Right ventricle myocardium superior (tissue), 1 donor: ENCODE measurements at regions of chr2 and their contacts with region 1.

Region 1: DNA sequence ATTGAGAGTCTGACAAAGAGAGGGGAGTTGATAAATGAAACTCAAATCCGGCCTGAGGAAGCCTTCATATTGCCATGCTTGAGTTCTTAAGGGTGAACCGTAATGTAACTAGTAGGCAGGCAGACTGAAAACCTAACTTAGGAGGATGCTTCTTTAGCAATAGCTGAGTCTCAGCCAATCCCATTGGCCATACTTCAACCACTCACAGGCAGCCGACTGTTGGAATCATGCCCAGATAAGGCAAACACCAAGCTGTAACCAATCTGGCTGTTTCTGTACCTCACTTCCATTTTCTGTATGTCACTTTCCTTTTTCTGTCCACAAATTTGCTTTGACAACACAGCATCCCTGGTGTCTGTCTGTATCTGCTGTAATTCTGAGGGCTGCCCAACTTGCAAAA is 39.5 kb downstream of the TPRKB start:
- DNase-seq: no peak
- ATAC-seq: no peak

Region 2: DNA sequence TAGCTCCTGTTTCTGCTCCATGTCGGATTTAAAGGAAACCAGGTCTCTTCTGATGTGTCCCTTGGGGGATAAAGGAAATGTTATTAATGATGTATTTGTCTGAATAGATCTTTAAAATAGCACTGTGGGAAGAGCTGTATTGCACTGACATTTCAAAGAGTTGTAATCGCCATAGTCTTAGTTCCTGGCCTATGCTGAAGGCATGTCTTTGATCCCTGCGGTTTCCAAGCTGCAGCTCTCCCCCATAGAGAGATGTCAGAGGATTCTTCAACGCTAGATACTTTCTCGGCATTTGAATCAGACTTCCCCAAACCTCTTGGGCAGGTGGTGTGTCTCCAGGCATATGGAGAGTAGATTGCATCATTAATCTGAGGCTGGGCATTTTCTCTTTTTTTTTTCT is 95.8 kb before region 1 on chr2:
- intact Hi-C with region 1: no loop called
- DNase-seq: no peak
- ATAC-seq: no peak

Region 3: GRCh38 chr2:73746015-73746876 is 48.6 kb after region 1 on chr2:
- intact Hi-C with region 1: no loop called
- DNase-seq: no peak
- ATAC-seq: peak; percentile 73

Region 4: DNA sequence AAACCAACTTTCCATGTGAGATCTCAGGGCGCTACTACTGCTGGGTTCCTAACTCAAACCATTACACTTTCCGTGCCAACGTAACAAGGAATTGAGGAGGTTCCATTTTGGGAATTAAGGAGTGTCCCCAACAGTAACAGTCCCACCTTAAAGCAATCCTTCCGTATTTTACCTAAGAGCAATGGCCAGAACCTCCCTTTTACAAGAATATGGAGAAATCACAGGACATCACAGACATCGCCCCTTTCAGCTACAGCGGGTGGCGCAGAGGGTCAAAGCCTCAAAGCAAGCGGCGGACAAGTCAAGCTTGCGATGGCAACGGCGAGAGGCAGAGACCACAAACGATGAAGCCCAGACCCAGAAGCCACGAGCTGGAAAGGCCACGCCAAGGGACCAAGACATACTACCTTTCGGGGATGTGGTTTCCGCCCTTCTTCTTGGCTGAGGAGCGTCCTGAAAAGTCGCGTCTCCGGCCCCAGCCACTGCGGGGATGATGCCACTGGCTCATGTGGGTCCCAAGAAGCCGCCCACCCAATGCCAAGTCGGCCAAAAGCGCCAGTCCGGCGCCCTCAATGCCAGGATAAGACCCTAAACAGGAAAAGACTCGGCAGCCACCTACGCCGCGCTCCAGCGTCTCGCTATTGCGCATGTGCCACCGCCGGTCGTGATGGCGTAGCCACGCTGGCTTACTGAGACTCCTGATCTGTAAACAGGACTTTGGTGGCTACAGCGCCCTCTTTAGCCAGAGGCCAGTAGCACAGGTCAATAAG is 82.0 kb after region 1 on chr2 and contains the start of gene DUSP11:
- intact Hi-C with region 1: loop called (anchors 10 kb)
- DNase-seq: peak; percentile 98
- ATAC-seq: peak; percentile 100
- total RNA-seq, gene DUSP11: 11.4 TPM